Body of pancreas (tissue), 4 donors: ENCODE measurements at regions of chr9 and their contacts with region 1.

Region 1: GRCh38 chr9:131762356-131762932 is 22.6 kb upstream of the RAPGEF1 start:
- DNase-seq: peak; percentile 75 to 86 (median 80)
- ATAC-seq: peak; percentile 93
- H3K4me3 ChIP-seq: no peak overlapping the region
- H3K27ac ChIP-seq: no peak overlapping the region
- H3K4me1 ChIP-seq: peaks cover 7% of the 10 kb centered on the region
- H3K27me3 ChIP-seq: no peaks in the 10 kb centered on the region
- CTCF ChIP-seq: peak; percentile 86 to 96 (median 93)
- POLR2A ChIP-seq: no peak

Region 2: GRCh38 chr9:132250324-132251262 is 488.1 kb after region 1 on chr9:
- intact Hi-C with region 1: loop called (anchors 5 kb)
- DNase-seq: no peak
- ATAC-seq: no peak
- H3K4me3 ChIP-seq: no peak overlapping the region
- H3K27ac ChIP-seq: no peak overlapping the region
- H3K4me1 ChIP-seq: peaks cover 14% of the 10 kb centered on the region
- H3K27me3 ChIP-seq: no peaks in the 10 kb centered on the region
- CTCF ChIP-seq: no peak
- POLR2A ChIP-seq: no peak

Region 3: DNA sequence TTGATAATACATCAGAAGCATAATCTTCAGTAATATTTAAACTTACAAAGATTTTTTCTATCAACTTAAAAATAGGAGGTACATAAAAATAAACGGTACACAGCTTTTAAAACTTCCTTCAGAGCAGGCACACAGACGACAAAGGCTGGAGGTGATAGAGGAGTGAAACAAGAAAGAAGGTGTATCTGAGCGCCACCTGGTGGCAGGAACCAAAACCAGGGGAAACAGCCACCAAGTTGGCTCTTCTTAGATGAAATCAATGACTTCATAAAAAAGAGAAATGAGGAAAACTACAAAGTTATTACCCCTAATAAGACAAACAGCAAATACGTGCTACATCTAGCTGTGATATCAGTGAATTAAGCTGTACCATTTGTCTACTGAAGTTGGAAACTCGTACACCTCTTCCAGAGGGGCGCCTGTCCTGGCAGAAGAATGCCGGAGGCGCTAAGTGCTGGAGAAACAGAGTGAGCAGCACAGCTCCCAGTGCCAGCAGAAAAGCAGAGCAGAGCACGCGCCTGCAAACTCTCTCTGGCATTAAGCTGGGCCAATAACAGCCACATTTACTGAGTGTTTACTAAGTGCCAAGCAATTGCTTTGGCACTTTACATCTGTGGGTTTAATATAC is 506.4 kb after region 1 on chr9:
- intact Hi-C with region 1: loop called (anchors 5 kb)
- DNase-seq: peak; percentile 71 to 81 (median 76)
- ATAC-seq: peak; percentile 68
- H3K4me3 ChIP-seq: no peak overlapping the region
- H3K27ac ChIP-seq: no peak overlapping the region
- H3K4me1 ChIP-seq: no peaks in the 10 kb centered on the region
- H3K27me3 ChIP-seq: no peaks in the 10 kb centered on the region
- CTCF ChIP-seq: peak; percentile 62 to 87 (median 72)
- POLR2A ChIP-seq: no peak

Region 4: GRCh38 chr9:132943651-132944301 is 1181.3 kb after region 1 on chr9:
- intact Hi-C with region 1: no loop called
- DNase-seq: no peak
- ATAC-seq: no peak
- H3K4me3 ChIP-seq: peak overlapping the region; percentile 72 to 97
- H3K27ac ChIP-seq: peak overlapping the region; percentile 82 to 98 (median 98)
- H3K4me1 ChIP-seq: peaks cover 44% of the 10 kb centered on the region
- H3K27me3 ChIP-seq: no peaks in the 10 kb centered on the region
- CTCF ChIP-seq: no peak
- POLR2A ChIP-seq: no peak